Aorta (tissue), 5 donors: ENCODE measurements at regions of chr5 and their contacts with region 1.

Region 1: DNA sequence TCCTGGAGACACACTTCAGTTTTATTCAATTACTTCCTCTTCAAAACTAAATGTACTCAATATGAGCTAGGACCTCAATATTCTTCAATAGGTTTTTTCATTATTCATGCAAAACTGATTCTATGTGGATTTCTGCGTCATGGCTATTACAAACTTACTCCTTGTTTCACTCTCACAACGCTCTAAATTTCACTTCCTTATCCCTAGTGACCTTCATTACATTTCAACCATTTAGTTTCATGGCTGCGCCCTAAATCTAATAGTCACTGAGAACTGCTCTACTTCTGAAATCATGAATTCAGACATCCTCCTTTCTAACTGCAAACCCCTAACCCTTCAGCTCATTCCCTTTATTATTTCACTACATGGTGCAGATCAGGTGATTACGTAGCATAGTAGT is 93.9 kb downstream of the SLC25A46 start:
- DNase-seq: no peak
- ATAC-seq: no peak
- H3K4me3 ChIP-seq: no peak overlapping the region
- H3K27ac ChIP-seq: no peak overlapping the region
- H3K4me1 ChIP-seq: no peaks in the 10 kb centered on the region
- H3K27me3 ChIP-seq: no peaks in the 10 kb centered on the region

Region 2: GRCh38 chr5:110736753-110737152 is 95.9 kb before region 1 on chr5:
- intact Hi-C with region 1: no loop called
- DNase-seq: no peak
- ATAC-seq: no peak
- H3K4me3 ChIP-seq: no peak overlapping the region
- H3K27ac ChIP-seq: no peak overlapping the region
- H3K4me1 ChIP-seq: peaks cover 0 to 2% of the 10 kb centered on the region in 2 donors
- H3K27me3 ChIP-seq: no peaks in the 10 kb centered on the region

Region 3: GRCh38 chr5:110880413-110880812 is 47.7 kb after region 1 on chr5:
- intact Hi-C with region 1: no loop called
- DNase-seq: peak in 1 of 2 donors; percentile 68
- ATAC-seq: peak; percentile 50
- H3K4me3 ChIP-seq: no peak overlapping the region
- H3K27ac ChIP-seq: no peak overlapping the region
- H3K4me1 ChIP-seq: no peaks in the 10 kb centered on the region
- H3K27me3 ChIP-seq: no peaks in the 10 kb centered on the region

Region 4: DNA sequence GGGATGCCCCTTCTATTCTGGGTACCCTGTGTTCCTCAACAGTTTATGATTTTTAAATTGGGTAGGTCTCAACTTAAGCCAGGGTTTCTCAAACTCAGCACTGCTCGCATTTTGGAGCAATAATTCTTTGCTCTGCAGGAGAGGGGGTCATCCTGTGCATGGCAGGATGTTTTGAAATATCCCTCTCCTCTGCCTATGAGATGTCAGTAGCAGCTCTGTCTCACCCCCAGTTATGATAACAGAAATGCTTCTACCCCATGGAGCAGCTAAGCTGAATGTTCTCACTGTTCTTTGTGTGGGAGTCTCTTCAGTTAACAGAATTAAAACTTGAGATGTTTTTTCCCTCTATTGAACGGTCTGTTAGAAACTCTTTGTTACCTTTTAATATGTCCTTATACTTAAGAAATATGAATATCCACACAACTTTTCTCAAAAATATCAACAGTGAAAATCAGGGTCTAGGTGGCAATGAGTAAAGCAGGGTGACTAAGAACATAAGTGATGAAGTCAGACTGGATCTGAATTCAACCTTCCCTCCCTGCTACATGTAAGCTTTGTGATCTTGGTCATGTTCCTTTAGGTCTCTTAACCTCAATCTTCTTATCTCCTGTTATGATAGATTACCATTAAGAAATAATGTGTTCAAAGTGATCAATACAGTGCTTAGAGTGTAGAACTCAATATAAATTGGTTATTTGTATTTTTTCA is 480.5 kb after region 1 on chr5:
- intact Hi-C with region 1: loop called in 1 of 2 experiments (anchors 5 kb)
- DNase-seq: no peak
- ATAC-seq: no peak
- H3K4me3 ChIP-seq: no peak overlapping the region
- H3K27ac ChIP-seq: no peak overlapping the region
- H3K4me1 ChIP-seq: no peaks in the 10 kb centered on the region
- H3K27me3 ChIP-seq: no peaks in the 10 kb centered on the region